Caco-2 (cell line): ENCODE measurements at regions of chr19 and their contacts with region 1.

Region 1: DNA sequence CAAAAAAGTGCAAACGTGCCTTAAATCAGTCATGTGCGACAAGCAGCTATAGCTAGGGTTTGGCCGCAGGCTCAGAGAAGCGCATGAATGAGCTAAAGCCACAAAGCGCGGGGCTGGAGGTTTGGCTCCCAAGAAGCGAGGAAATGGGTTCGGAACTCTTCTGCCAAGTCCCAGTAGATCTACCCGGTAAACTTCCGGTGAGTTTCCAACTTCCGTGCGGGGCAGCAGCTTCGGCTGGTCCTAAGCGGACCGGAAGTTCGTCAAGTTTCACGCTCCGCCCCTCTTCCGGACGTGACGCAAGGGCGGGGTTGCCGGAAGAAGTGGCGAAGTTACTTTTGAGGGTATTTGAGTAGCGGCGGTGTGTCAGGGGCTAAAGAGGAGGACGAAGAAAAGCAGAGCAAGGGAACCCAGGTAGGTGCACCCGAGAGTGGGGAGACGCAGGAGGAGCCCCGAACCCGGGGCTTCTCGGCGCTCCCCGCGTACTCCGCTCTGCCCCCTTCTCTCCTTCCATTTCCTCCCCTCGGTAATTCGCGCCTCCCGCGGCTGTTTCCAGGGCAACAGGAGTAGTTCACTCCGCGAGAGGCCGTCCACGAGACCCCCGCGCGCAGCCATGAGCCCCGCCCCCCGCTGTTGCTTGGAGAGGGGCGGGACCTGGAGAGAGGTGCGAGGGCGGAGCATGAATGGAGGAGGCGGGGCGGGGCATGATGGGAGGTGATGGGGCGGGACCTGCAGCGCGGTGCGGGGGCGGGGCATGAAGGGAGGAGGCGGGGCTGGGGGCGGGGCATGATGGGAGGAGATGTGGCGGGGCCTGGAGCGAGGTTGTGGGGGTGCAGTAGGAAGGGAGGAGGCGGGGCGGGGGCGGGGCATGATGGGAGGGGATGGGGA is at the start of gene NR1H2:
- DNase-seq: peak; percentile 95 to 96
- H3K4me3 ChIP-seq: peak within 1 kb of the TSS; percentile 72
- H3K4me3 Mint-ChIP-seq: peak within 1 kb of the TSS; percentile 99
- H3K27ac Mint-ChIP-seq: peak within 1 kb of the TSS; percentile 100
- H3K4me1 ChIP-seq: no peaks in the 10 kb centered on the region
- H3K4me1 Mint-ChIP-seq: no peaks in the 10 kb centered on the region
- H3K27me3 ChIP-seq: no peaks in the 10 kb centered on the region
- H3K27me3 Mint-ChIP-seq: no peaks in the 10 kb centered on the region
- CTCF ChIP-seq: no peak
- total RNA-seq, gene NR1H2: 38.3 and 40.3 TPM in 2 replicates

Region 2: GRCh38 chr19:50341091-50341564 is 35.3 kb before region 1 on chr19:
- CTCF ChIA-PET with region 1: no interaction called
- POLR2A ChIA-PET with region 1: no interaction called
- intact Hi-C with region 1: no loop called
- DNase-seq: no peak
- H3K4me3 ChIP-seq: no peak overlapping the region
- H3K4me3 Mint-ChIP-seq: no peak overlapping the region
- H3K27ac Mint-ChIP-seq: no peak overlapping the region
- H3K4me1 ChIP-seq: no peaks in the 10 kb centered on the region
- H3K4me1 Mint-ChIP-seq: peaks cover 2% of the 10 kb centered on the region
- H3K27me3 ChIP-seq: no peaks in the 10 kb centered on the region
- H3K27me3 Mint-ChIP-seq: no peaks in the 10 kb centered on the region
- CTCF ChIP-seq: no peak

Region 3: DNA sequence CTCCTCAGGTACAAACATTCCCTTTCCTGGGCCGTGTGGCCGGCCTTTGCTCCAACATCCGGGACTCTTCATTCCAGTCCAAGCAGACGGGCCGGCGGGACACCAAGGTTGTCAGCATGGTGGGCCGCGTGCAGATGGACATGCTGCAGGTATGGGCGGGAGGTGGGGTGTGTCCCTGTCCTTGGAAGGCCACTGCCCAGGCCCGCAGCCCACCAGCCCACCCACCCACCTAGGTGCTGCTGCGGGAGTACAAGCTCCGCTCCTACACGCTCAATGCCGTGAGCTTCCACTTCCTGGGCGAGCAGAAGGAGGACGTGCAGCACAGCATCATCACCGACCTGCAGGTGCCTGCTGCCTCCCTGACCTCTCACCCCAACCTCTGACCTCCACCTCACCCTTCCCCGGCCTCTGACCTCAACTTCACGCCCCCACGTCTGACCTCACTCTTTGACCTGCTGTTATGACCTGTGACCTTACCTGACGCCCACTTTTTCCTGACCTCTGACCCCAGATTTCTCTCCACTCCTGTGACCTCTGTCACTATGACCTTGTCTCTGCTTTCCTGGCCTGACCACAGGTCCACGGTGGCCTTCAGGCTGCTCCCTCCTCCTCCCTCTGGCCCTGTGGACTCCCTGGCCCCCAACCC is 29.9 kb after region 1 on chr19:
- CTCF ChIA-PET with region 1: interaction called, 13 read pairs
- POLR2A ChIA-PET with region 1: no interaction called
- intact Hi-C with region 1: no loop called
- DNase-seq: no peak
- H3K4me3 ChIP-seq: no peak overlapping the region
- H3K4me3 Mint-ChIP-seq: peak overlapping the region; percentile 14
- H3K27ac Mint-ChIP-seq: no peak overlapping the region
- H3K4me1 ChIP-seq: peaks cover 11% of the 10 kb centered on the region
- H3K4me1 Mint-ChIP-seq: no peaks in the 10 kb centered on the region
- H3K27me3 ChIP-seq: no peaks in the 10 kb centered on the region
- H3K27me3 Mint-ChIP-seq: no peaks in the 10 kb centered on the region
- CTCF ChIP-seq: no peak